ENCODE measurements at regions of chr18 and their contacts with region 1.

Region 1: DNA sequence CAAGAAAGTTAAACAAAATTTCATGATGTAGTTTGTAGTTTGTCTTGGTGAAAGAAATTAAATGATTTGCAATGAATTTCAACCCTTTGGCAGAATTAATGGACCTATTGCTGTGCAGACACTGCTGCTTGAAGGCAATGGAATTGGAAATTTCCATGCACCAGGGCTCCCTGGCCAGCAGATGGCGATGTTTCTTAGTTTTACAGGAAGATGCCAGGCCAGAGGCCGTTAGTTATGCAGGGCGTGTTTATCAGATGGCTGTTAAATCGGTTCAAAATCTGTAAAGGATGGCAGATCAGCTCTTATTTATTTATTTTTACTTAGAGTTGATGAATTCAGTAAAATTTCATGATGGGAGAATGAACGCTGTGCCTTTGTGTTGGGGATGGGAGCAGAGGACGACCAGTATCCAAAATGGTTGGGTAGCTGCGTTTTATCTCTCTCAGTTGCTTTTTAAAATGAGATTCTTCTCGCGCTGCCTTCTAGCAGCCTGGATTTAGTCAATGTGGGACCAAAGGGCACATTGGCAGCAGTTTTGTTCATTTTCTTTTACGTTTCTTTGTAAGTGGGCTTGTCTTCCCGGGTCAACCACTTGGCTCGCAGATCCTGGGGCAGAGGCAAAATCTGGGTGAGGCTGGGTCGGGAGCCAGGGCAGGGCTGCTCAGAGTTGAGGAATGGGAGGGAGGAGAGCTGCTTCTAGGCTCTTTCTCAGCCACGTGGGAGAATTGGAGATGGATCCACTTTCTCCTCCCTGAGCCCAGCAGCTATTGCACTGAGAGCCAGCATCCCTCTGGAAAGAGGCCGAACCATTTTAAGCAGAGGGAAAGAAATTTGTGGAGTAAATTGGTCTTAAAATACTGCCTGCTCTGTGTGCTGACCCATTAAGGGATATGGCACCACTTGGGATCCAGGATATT is 344.0 kb downstream of the PIK3C3 start:
- DNase-seq: peak; percentile 43
- H3K4me3 ChIP-seq: no peak overlapping the region
- H3K27ac ChIP-seq: no peak overlapping the region
- H3K4me1 ChIP-seq: no peaks in the 10 kb centered on the region
- H3K27me3 ChIP-seq: no peaks in the 10 kb centered on the region
- CTCF ChIP-seq: peak; percentile 88 to 93

Region 2: GRCh38 chr18:40877096-40877495 is 1421.9 kb before region 1 on chr18:
- CTCF ChIA-PET with region 1: no interaction called
- dilution Hi-C with region 1: no loop called
- in situ Hi-C with region 1: no loop called
- intact Hi-C with region 1: no loop called
- DNase-seq: peak; percentile 86
- H3K4me3 ChIP-seq: no peak overlapping the region
- H3K27ac ChIP-seq: peak overlapping the region; percentile 83
- H3K4me1 ChIP-seq: peaks cover 54% of the 10 kb centered on the region
- H3K27me3 ChIP-seq: no peaks in the 10 kb centered on the region
- CTCF ChIP-seq: no peak

Region 3: DNA sequence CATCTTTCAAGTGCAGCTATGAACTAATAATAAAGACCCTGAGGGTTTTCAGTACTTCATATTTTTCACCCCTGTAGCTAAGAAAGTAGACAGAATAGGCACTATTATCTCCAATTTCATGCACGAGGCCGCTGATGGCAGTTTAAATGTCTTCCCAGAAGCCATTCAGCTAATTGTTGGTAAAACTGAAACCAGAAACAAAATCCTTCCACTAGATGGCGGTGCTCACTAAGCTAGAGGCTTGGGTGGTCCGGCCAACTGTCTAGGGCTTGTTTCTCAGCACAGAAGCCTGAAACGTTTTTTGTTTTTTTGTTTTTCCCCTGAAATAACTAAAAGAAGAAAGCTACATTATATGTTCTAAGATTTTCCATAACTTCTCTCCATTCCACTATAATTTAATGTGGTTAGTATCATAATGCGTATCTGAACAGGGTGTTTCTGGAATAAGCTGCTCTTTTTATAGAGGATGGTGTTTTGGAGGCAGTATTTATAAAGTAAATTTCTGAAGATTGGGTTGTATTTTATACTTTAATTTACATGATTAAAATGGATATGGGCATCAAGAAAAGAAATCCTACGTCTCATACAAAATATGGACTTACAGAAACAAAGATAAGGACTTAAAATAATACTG is 184.6 kb before region 1 on chr18:
- CTCF ChIA-PET with region 1: no interaction called
- dilution Hi-C with region 1: no loop called
- in situ Hi-C with region 1: no loop called
- intact Hi-C with region 1: loop called (anchors 1 kb)
- DNase-seq: peak; percentile 53
- H3K4me3 ChIP-seq: no peak overlapping the region
- H3K27ac ChIP-seq: no peak overlapping the region
- H3K4me1 ChIP-seq: peaks cover 5% of the 10 kb centered on the region
- H3K27me3 ChIP-seq: no peaks in the 10 kb centered on the region
- CTCF ChIP-seq: peak; percentile 80 to 91

Region 4: GRCh38 chr18:42404151-42404550 is 105.1 kb after region 1 on chr18:
- CTCF ChIA-PET with region 1: no interaction called
- dilution Hi-C with region 1: no loop called
- in situ Hi-C with region 1: no loop called
- intact Hi-C with region 1: no loop called
- DNase-seq: no peak
- H3K4me3 ChIP-seq: no peak overlapping the region
- H3K27ac ChIP-seq: no peak overlapping the region
- H3K4me1 ChIP-seq: no peaks in the 10 kb centered on the region
- H3K27me3 ChIP-seq: no peaks in the 10 kb centered on the region
- CTCF ChIP-seq: no peak

Region 5: DNA sequence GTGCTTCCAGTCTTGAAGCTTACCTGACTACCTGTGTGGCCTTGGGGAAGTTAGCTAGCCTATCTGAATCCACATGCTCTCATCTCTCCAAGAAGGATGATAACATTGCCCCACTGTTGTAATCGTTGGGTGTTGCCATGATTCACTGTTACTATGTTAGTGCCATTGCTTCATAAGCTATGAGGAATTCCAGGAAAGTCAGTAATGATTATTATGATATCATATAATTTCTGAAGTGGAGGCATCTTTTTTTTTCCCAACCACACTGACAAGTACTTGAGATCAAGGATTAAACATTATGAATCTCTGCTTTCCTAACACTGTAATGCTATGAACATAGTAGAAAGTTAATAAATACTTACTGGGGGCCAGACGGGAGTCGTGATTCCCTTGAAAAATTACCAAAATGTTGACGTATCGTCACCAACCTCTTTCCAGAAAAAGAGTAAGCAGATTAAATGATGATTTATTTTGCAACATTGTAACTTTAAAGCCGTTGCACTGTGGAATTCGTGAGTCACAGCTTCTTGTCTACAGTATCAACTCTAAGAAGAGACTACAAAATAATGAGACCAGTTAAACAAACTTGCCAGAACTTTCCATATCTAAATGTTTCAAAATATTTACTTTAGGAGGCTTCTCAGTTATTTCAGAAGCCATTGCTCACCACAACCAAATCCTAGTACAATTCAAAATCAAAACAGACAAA is 115.9 kb after region 1 on chr18:
- CTCF ChIA-PET with region 1: no interaction called
- dilution Hi-C with region 1: no loop called
- in situ Hi-C with region 1: no loop called
- intact Hi-C with region 1: loop called (anchors 10 kb)
- DNase-seq: peak; percentile 79
- H3K4me3 ChIP-seq: no peak overlapping the region
- H3K27ac ChIP-seq: no peak overlapping the region
- H3K4me1 ChIP-seq: no peaks in the 10 kb centered on the region
- H3K27me3 ChIP-seq: no peaks in the 10 kb centered on the region
- CTCF ChIP-seq: no peak

Region 6: GRCh38 chr18:42486296-42486695 is 187.3 kb after region 1 on chr18:
- CTCF ChIA-PET with region 1: no interaction called
- dilution Hi-C with region 1: no loop called
- in situ Hi-C with region 1: no loop called
- intact Hi-C with region 1: no loop called
- DNase-seq: no peak
- H3K4me3 ChIP-seq: no peak overlapping the region
- H3K27ac ChIP-seq: no peak overlapping the region
- H3K4me1 ChIP-seq: no peaks in the 10 kb centered on the region
- H3K27me3 ChIP-seq: no peaks in the 10 kb centered on the region
- CTCF ChIP-seq: no peak

Region 7: GRCh38 chr18:42586601-42587000 is 287.6 kb after region 1 on chr18:
- CTCF ChIA-PET with region 1: no interaction called
- dilution Hi-C with region 1: no loop called
- in situ Hi-C with region 1: no loop called
- intact Hi-C with region 1: loop called (anchors 10 kb)
- DNase-seq: no peak
- H3K4me3 ChIP-seq: no peak overlapping the region
- H3K27ac ChIP-seq: no peak overlapping the region
- H3K4me1 ChIP-seq: no peaks in the 10 kb centered on the region
- H3K27me3 ChIP-seq: peaks cover 2% of the 10 kb centered on the region
- CTCF ChIP-seq: no peak

Region 8: DNA sequence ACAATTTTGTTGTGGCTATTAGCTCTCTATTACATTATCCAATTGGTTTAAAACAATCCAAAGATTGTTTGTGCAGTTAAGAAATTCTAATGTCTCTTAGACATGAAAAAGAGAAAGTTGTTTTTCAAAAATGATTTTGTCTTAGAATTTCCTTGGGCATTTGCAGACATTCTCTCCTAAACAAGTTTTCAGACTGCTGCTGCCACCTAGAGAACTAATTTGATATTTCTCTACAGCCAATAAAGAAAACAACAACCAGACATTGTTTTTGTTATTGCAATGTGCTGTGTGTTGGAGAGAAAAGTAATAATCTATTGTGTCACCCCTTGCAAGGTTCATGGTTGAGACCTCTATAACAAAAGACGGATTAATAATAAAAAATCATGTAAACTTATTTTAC is 1097.2 kb after region 1 on chr18:
- CTCF ChIA-PET with region 1: no interaction called
- dilution Hi-C with region 1: no loop called
- in situ Hi-C with region 1: no loop called
- intact Hi-C with region 1: loop called (anchors 5 kb)
- DNase-seq: no peak
- H3K4me3 ChIP-seq: no peak overlapping the region
- H3K27ac ChIP-seq: no peak overlapping the region
- H3K4me1 ChIP-seq: peaks cover 6% of the 10 kb centered on the region
- H3K27me3 ChIP-seq: peaks cover 3% of the 10 kb centered on the region
- CTCF ChIP-seq: peak; percentile 53 to 62